Tibial artery (tissue), 4 donors: ENCODE measurements at regions of chr20 and their contacts with region 1.

Region 1: GRCh38 chr20:3888622-3889488 is at the start of gene PANK2:
- DNase-seq: peak; percentile 99 to 100
- H3K4me3 ChIP-seq: peak within 1 kb of the TSS; percentile 95 to 100
- H3K27ac ChIP-seq: peak within 1 kb of the TSS; percentile 94 to 97
- H3K4me1 ChIP-seq: peaks cover 0 to 46% (median 33%) of the 10 kb centered on the region in 4 donors
- H3K27me3 ChIP-seq: no peaks in the 10 kb centered on the region
- CTCF ChIP-seq: peak; percentile 69 to 77

Region 2: DNA sequence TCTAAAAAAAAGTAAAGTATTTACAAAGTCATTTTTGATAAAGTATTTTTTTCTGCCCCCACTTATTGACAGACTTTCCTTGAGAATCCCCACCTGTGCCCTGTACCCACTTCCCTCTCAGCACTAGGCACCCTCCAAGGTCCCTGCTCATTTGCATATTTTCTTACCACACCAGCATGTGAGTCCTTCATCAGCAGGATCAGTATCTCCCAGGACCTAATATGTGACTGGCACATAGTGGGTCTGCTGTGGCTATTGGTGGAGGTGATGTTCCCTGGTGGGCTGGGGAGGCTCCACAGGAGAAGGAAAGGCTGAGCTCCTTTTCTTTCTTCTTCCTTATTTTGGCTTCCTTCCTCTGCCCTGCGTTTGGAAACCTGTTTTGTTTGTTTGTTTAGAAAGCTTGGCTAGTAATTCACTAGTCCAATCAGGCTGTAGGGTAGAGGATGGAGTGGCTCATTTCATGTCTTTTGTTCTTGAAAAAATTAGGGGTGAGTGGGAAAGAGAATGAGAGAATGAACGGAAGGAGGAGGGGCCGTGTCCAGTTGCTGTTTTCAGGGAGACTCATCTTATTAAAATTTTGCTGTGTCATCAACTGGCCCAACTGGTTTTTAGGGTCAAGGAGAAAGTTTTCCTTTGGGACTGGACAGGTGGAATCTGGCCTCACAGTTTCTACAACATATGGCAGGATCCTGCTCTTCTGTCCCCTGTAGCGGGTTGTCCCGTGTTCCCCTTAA is 129.3 kb after region 1 on chr20:
- intact Hi-C with region 1: loop called (anchors 5 kb)
- DNase-seq: no peak
- H3K4me3 ChIP-seq: no peak overlapping the region
- H3K27ac ChIP-seq: no peak overlapping the region
- H3K4me1 ChIP-seq: peaks cover 0 to 28% (median 20%) of the 10 kb centered on the region in 4 donors
- H3K27me3 ChIP-seq: no peaks in the 10 kb centered on the region
- CTCF ChIP-seq: no peak

Region 3: DNA sequence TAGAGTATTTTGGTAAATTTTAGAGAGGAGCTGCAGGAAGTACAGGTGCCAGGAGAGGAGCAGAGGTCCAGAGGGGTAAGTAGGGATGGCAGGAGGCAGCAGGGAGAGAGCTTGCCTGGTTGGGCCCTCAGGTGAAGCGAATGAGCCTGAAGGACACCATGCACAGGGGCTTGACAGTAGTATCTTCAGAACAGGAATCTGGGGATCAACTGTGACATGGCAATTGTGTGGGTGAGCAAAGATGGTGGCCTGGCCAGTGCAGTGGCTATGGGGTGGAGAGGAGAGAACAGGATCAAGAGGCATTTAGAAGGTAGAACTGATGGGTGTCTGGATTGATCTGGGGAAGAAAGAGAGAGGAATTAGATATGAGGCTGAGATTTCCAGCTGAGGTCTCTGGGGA is 195.2 kb after region 1 on chr20:
- intact Hi-C with region 1: loop called (anchors 2 kb)
- DNase-seq: no peak
- H3K4me3 ChIP-seq: no peak overlapping the region
- H3K27ac ChIP-seq: peak overlapping the region in 1 of 2 donors; percentile 53
- H3K4me1 ChIP-seq: peaks cover 0 to 34% (median 15%) of the 10 kb centered on the region in 4 donors
- H3K27me3 ChIP-seq: no peaks in the 10 kb centered on the region
- CTCF ChIP-seq: no peak

Region 4: DNA sequence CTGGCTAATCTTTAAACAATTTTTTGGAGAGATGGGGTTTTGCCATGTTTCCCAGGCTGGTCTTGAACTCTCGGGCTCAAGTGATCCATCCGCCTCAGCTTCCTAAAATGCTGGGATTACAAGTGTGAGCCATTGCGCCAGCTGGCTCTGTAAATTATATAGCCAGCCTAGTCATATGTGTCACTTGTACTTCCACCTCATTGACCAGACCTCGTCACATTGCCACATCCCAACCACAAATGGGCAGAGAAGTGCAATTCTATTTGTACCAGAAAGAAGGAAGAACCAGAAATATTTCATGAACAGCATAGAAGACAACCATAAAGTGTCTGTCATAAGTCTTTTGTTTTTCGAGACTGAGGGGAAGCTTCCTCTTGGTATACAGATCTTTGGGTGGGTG is 431.4 kb after region 1 on chr20:
- intact Hi-C with region 1: no loop called
- DNase-seq: no peak
- H3K4me3 ChIP-seq: no peak overlapping the region
- H3K27ac ChIP-seq: no peak overlapping the region
- H3K4me1 ChIP-seq: peaks cover 0 to 1% (median 0%) of the 10 kb centered on the region in 4 donors
- H3K27me3 ChIP-seq: no peaks in the 10 kb centered on the region
- CTCF ChIP-seq: no peak